ENCODE measurements at regions of chr2 and their contacts with region 1.

Region 1: GRCh38 chr2:55150834-55151233 is 81.3 kb downstream of the CLHC1 start:
- DNase-seq: peak; percentile 79 to 89 (median 84)
- H3K4me3 ChIP-seq: no peak overlapping the region
- H3K4me3 Mint-ChIP-seq: no peak overlapping the region
- H3K27ac ChIP-seq: peak overlapping the region; percentile 58 to 94
- H3K27ac Mint-ChIP-seq: peak overlapping the region; percentile 90 to 98 (median 97)
- H3K4me1 ChIP-seq: peaks cover 61 to 71% of the 10 kb centered on the region in 2 donors
- H3K4me1 Mint-ChIP-seq: peaks cover 60% of the 10 kb centered on the region
- H3K27me3 ChIP-seq: no peaks in the 10 kb centered on the region
- H3K27me3 Mint-ChIP-seq: no peaks in the 10 kb centered on the region
- CTCF ChIP-seq: no peak

Region 2: DNA sequence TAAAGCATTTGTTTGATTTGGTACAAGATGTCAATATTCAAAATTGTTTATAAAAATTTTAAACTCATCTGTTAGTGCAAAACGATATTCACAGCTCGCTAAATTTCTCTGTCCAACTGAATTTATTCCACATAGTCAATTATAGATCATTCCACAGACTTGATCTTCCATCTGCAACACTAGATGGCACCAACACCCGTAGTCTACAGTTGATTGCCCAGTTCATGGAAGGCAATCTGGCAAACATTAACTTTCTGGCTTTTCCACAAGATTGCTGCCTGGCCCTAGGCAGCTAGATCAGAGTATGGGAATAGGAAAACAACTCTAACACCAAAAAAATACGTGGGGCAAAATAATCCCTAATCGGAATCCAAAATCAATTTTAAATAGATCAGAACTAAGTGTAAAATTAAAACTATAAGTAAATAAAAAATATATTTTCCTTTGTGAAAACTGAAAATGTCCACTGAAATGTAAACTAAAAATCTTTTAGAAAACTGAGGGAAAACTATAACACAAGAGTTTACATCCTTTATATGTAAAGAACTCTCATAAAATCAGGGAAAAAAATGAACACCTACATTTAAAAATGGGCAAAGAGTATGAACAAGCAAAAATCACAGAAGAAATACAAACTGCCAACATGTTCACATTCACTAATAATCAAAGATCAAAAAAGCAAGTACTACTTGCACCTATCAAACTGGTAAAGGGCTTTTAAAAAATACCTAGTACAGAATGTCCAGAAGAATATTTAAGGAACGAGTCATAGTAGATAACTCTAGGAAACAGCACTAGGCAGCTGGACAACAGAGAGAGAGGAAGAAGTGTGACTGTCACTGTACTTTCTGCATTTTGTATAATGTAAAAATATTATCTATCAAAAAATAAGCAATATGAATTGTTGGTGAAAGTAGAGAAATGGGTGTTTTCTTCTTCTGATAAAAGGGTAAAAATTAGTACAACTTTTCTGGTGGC is 135.6 kb before region 1 on chr2:
- intact Hi-C with region 1: loop called in 1 of 2 experiments (anchors 5 kb)
- DNase-seq: peak; percentile 30 to 56 (median 54)
- H3K4me3 ChIP-seq: no peak overlapping the region
- H3K4me3 Mint-ChIP-seq: no peak overlapping the region
- H3K27ac ChIP-seq: no peak overlapping the region
- H3K27ac Mint-ChIP-seq: peak overlapping the region in 5 of 7 donors; percentile 27 to 75 (median 56)
- H3K4me1 ChIP-seq: peaks cover 45 to 61% of the 10 kb centered on the region in 2 donors
- H3K4me1 Mint-ChIP-seq: peaks cover 63% of the 10 kb centered on the region
- H3K27me3 ChIP-seq: no peaks in the 10 kb centered on the region
- H3K27me3 Mint-ChIP-seq: no peaks in the 10 kb centered on the region
- CTCF ChIP-seq: peak; percentile 68

Region 3: DNA sequence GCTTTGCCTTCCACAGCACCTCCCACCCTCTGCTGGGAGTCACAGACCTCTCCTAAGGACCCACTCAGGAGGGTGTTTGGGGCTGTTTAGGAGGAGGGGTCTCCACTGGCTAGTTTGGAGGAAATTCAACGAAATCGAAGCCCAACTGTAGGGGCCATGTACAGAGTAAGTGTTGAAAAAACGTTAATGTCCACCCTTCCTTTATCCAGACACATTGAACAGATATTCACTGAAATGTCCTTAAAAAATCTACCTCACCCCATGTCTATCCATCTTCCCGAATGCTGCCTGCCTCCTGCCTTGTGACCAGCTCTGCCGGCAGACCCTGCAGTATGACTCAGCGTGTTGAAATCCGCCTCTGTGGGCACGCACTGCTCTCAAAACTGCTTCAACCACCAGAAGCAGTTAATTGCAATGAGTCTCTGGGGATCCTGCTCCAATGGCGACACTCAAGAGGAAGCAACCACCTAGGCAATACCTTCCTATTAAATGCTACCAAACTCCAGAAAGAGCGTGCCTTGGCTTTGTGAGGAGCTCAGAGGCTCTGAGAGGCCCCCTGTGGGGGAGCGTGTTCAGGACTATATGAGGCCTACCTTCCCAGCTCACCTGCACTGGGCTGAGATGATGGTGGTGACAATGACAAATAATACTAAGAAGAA is 39.1 kb before region 1 on chr2:
- intact Hi-C with region 1: loop called in 1 of 2 experiments (anchors 5 kb)
- DNase-seq: peak; percentile 91 to 97 (median 95)
- H3K4me3 ChIP-seq: peak overlapping the region in 1 of 3 experiments; percentile 54
- H3K4me3 Mint-ChIP-seq: peak overlapping the region; percentile 34 to 88
- H3K27ac ChIP-seq: peak overlapping the region; percentile 85 to 96
- H3K27ac Mint-ChIP-seq: peak overlapping the region; percentile 88 to 98 (median 94)
- H3K4me1 ChIP-seq: peaks cover 50 to 52% of the 10 kb centered on the region in 2 donors
- H3K4me1 Mint-ChIP-seq: peaks cover 49% of the 10 kb centered on the region
- H3K27me3 ChIP-seq: no peaks in the 10 kb centered on the region
- H3K27me3 Mint-ChIP-seq: peaks cover 0 to under 1% (median 0%) of the 10 kb centered on the region in 3 donors
- CTCF ChIP-seq: no peak

Region 4: DNA sequence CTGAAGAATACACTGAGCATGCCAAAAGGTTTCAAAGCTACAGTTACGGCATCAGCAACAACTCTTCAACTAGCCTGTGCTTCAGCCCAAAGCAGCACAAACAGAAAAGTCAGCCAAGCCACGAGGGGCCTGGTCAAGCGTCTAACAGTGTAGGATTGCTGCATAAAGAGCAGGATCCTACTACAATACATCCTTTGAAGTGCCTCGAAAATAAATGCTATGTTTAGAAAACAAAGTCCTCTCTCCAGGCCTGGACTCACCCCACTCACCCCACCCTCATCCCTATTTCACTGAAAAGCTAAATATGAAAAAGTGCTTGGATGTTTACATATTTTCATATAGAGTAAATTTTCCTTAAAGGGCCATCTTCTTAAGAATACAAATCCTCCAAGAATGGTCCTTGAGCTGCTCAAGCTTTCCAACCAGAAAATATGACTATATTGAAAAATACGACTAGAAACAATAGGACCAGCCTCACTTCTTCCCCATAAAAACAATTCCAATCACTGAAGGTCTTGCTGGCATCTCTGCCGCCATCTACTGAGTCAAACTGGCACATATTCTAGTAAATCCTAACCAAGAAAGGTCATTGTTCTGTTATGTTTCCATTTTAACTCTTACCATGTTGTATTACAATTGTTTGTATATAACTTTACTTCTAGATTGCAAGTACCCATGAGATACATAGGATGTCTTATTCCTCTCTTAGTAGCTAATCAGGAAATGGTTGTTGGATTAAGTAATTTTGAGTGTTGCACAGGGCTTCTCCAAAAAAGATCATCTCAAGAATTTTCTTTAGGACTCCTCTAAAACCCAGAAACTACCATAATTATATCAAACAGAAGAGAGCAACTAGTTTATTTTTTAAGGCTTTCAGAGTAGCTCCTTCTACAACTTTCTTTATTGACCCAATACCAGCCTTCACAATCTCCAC is 17.7 kb after region 1 on chr2:
- intact Hi-C with region 1: no loop called
- DNase-seq: peak; percentile 53 to 75 (median 68)
- H3K4me3 ChIP-seq: no peak overlapping the region
- H3K4me3 Mint-ChIP-seq: no peak overlapping the region
- H3K27ac ChIP-seq: peak overlapping the region in 1 of 2 donors; percentile 27
- H3K27ac Mint-ChIP-seq: no peak overlapping the region
- H3K4me1 ChIP-seq: peaks cover 8 to 10% of the 10 kb centered on the region in 2 donors
- H3K4me1 Mint-ChIP-seq: peaks cover 20% of the 10 kb centered on the region
- H3K27me3 ChIP-seq: no peaks in the 10 kb centered on the region
- H3K27me3 Mint-ChIP-seq: no peaks in the 10 kb centered on the region
- CTCF ChIP-seq: peak; percentile 81